IMR-90 (cell line): ENCODE measurements at regions of chr10 and their contacts with region 1.

Region 1: DNA sequence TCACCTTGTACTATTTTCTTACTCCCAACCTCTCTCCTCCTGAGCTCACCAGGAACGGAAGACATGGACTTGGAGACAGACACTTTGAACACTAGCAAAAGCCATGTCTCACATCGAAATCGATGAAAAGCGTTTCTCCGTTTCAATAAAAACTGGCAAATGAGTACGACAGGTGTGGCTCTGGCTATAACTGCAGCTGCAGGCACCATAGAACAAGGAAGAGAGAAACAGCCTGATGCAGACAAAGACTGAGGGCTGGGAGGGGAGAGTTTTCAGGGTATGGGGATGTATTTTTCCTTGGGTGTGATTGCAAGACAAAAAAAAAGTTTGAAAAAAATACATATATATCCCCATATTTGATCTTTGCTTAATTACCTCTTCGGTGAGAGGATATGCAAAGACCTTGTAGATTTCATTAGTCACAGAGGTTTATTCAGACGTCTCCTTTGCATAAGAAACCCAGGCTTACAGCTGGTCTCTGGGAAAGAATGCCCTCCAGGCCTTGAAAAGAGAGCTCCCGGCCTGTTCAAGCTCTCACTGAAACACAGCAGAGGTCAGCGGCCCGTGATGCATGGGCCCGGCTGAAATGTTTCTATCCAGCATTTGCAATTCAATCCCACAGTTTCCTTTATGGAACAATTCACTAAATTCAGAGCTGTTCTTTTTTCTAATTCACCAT is 63.1 kb downstream of the TLL2 start:
- DNase-seq: no peak
- ATAC-seq: no peak
- H3K4me3 ChIP-seq: no peak overlapping the region
- H3K27ac ChIP-seq: no peak overlapping the region
- H3K4me1 ChIP-seq: no peaks in the 10 kb centered on the region
- H3K27me3 ChIP-seq: peaks cover 1% of the 10 kb centered on the region
- CTCF ChIP-seq: no peak
- POLR2A ChIP-seq: no peak
- RAD21 ChIP-seq: no peak

Region 2: DNA sequence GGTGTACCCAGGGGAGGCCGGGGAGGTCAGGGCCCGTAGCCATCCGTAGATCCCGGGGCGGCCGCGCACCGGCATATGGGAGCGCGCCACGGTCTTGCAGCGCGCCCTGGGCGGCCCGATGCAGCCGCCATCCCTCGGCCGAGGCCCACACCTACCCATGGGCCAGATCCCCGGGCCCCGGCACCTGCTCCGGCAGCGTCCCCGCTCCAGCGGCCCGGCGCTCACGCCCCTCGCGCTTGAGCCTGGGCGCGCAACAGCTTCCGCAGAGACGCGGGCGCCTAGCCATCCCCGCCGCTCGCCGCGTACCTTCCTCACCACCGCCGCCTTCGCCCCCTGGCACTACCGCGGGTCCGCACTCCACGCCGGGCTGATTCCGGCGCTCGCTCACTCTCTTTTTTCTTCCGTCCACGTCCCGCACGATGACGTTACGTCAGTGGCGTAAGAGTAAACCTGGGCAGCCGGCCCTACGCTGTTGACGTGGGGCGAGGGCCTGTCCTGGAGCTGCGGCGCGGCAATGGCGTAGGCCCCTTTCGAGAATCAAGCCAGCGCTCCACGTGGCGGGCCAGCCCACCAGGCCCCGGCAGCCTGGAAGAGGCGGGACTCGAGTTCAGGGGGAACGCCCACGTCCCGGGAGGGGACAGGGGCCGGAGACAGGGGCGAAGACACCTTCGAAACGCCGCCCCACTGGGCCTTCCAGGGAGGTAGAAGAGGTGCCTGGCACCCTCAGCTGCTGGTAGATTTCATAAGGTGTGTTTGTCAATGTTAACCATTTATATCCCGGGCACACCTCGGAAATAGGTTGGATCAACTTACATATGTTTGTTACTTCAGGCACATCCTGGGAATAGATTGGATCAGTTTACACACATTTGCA is 794.1 kb before region 1 on chr10 and contains the start of gene ALDH18A1:
- CTCF ChIA-PET with region 1: no interaction called
- POLR2A ChIA-PET with region 1: no interaction called
- dilution Hi-C with region 1: no loop called
- in situ Hi-C with region 1: no loop called
- intact Hi-C with region 1: loop called (anchors 5 kb)
- DNase-seq: peak; percentile 89
- ATAC-seq: peak; percentile 95
- H3K4me3 ChIP-seq: peak within 1 kb of the TSS; percentile 74
- H3K27ac ChIP-seq: peak within 1 kb of the TSS; percentile 68
- H3K4me1 ChIP-seq: 0 out of 2 replicates have a peak, but pooled peaks cover 2% of the 10 kb centered on the region
- H3K27me3 ChIP-seq: no peaks in the 10 kb centered on the region
- CTCF ChIP-seq: no peak
- POLR2A ChIP-seq: peak; percentile 58; the same call in 1 of the 2 replicates
- RAD21 ChIP-seq: no peak
- total RNA-seq, gene ALDH18A1: 201 and 232 TPM in 2 replicates